MCF 10A (cell line): ENCODE measurements at regions of chr17 and their contacts with region 1.

Region 1: GRCh38 chr17:7687908-7688807 is at the start of gene WRAP53:
- DNase-seq: peak; percentile 100
- H3K4me3 Mint-ChIP-seq: peak within 1 kb of the TSS; percentile 97
- H3K27ac Mint-ChIP-seq: peak within 1 kb of the TSS; percentile 100
- H3K4me1 Mint-ChIP-seq: peaks cover 22% of the 10 kb centered on the region
- H3K27me3 Mint-ChIP-seq: no peaks in the 10 kb centered on the region
- CTCF ChIP-seq: peak; percentile 97
- total RNA-seq, gene WRAP53: 10.7 and 11.7 TPM in 2 replicates

Region 2: GRCh38 chr17:7239091-7240027 is 448.8 kb before region 1 on chr17 and contains the start of gene PHF23:
- CTCF ChIA-PET with region 1: interaction called, 3 read pairs
- POLR2A ChIA-PET with region 1: interaction called, 14 read pairs
- intact Hi-C with region 1: no loop called
- DNase-seq: peak; percentile 99
- H3K4me3 Mint-ChIP-seq: peak within 1 kb of the TSS; percentile 100
- H3K27ac Mint-ChIP-seq: peak within 1 kb of the TSS; percentile 91
- H3K4me1 Mint-ChIP-seq: peaks cover 47% of the 10 kb centered on the region
- H3K27me3 Mint-ChIP-seq: no peaks in the 10 kb centered on the region
- CTCF ChIP-seq: no peak
- total RNA-seq, gene PHF23: 41.8 and 47.1 TPM in 2 replicates

Region 3: GRCh38 chr17:7484067-7484918 is 203.9 kb before region 1 on chr17 and contains the start of gene POLR2A:
- CTCF ChIA-PET with region 1: interaction called, 6 read pairs
- POLR2A ChIA-PET with region 1: interaction called, 51 read pairs
- intact Hi-C with region 1: no loop called
- DNase-seq: peak; percentile 98
- H3K4me3 Mint-ChIP-seq: peak within 1 kb of the TSS; percentile 79
- H3K27ac Mint-ChIP-seq: peak within 1 kb of the TSS; percentile 100
- H3K4me1 Mint-ChIP-seq: peaks cover 43% of the 10 kb centered on the region
- H3K27me3 Mint-ChIP-seq: no peaks in the 10 kb centered on the region
- CTCF ChIP-seq: no peak
- total RNA-seq, gene POLR2A: 89.6 and 107 TPM in 2 replicates

Region 4: DNA sequence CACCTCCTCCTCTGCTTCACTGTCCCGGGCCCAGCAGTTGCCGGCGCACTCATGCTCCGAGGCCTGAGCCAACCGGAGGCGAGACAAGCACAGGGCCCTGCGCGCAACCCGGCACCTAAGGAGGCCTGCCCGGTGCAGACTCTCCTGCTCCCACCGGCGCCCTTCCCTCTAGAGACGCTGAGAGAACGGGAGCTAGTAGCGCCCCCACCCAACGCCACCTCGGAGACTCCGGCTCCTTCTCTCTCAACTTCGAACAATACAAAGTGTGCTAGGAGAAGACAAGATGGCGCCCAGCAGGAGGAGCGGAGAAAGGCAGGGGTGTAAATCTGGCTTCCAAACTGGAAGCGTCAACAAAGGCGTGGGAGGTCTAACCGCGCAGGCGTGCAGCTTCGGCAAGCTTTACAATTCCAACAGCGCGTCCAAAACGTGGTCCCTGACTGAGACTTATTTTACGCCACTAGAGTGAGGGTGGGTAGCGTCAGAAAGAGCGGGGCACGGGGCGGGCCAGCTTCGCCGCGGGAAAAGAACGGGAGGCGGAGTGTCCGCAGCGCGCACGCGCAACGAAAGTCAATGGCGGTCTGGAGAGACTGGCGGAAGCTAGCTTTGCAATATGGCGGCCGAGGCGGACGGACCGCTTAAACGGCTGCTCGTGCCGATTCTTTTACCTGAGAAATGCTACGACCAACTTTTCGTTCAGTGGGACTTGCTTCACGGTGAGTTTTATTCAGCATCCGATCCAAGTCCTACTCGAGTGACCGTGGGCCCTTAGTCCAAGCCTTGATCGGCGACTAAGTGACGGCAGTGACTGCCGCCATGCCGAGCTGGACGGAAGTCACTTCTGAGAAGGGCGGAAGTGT is 104.7 kb before region 1 on chr17 and contains the start of gene MPDU1:
- CTCF ChIA-PET with region 1: interaction called, 89 read pairs
- POLR2A ChIA-PET with region 1: interaction called, 303 read pairs
- intact Hi-C with region 1: loop called (anchors 1 kb)
- DNase-seq: peak; percentile 98
- H3K4me3 Mint-ChIP-seq: peak within 1 kb of the TSS; percentile 93
- H3K27ac Mint-ChIP-seq: peak within 1 kb of the TSS; percentile 100
- H3K4me1 Mint-ChIP-seq: peaks cover 56% of the 10 kb centered on the region
- H3K27me3 Mint-ChIP-seq: no peaks in the 10 kb centered on the region
- CTCF ChIP-seq: no peak
- total RNA-seq, gene MPDU1: 52.0 and 56.5 TPM in 2 replicates

Region 5: GRCh38 chr17:7632492-7632894 is 55.7 kb before region 1 on chr17:
- CTCF ChIA-PET with region 1: interaction called, 48 read pairs
- POLR2A ChIA-PET with region 1: interaction called, 208 read pairs
- intact Hi-C with region 1: loop called (anchors 1 kb)
- DNase-seq: peak; percentile 69
- H3K4me3 Mint-ChIP-seq: no peak overlapping the region
- H3K27ac Mint-ChIP-seq: no peak overlapping the region
- H3K4me1 Mint-ChIP-seq: no peaks in the 10 kb centered on the region
- H3K27me3 Mint-ChIP-seq: no peaks in the 10 kb centered on the region
- CTCF ChIP-seq: peak; percentile 63

Region 6: GRCh38 chr17:7844292-7845154 is 156.4 kb after region 1 on chr17:
- CTCF ChIA-PET with region 1: no interaction called
- POLR2A ChIA-PET with region 1: interaction called, 32 read pairs
- intact Hi-C with region 1: no loop called
- DNase-seq: peak; percentile 96
- H3K4me3 Mint-ChIP-seq: peak overlapping the region; percentile 79
- H3K27ac Mint-ChIP-seq: peak overlapping the region; percentile 87
- H3K4me1 Mint-ChIP-seq: peaks cover 27% of the 10 kb centered on the region
- H3K27me3 Mint-ChIP-seq: no peaks in the 10 kb centered on the region
- CTCF ChIP-seq: no peak

Region 7: DNA sequence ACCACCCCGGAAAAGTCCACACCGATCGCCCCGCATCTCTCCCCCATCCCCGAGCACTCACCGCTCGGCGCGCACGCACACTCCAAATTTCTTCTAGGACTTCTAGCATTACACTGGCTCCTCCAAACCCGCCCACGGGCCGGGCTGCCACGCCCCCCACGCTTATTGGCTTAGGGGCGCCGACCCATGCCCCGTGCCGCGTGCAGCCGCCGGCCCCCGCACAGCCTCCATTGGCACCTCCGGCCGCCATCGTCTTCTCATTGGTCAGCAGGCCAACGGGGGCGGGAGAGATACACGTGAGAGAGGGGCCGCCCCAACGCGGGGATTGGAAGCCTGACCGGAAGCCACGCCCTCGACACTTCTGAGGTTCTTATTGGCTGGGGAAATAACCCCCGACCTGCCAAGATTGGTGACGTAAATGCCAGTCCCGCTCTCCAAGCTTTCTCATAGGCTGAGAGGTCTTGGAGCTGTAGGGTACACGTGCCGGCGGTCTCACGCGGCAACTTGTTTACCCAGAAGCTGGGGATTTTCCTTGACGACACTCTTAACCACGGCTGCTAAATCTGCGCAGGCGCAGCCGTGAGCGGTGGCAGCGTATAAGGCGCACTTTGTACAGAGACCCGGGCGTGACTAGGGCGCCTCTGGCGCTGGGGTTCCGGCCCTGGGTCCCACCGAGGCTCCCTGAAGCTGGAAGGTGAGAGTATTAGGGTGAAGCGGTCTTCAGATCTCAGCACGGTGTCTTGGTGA is 468.3 kb after region 1 on chr17:
- CTCF ChIA-PET with region 1: no interaction called
- POLR2A ChIA-PET with region 1: interaction called, 10 read pairs
- intact Hi-C with region 1: no loop called
- DNase-seq: peak; percentile 100
- H3K4me3 Mint-ChIP-seq: no peak overlapping the region
- H3K27ac Mint-ChIP-seq: no peak overlapping the region
- H3K4me1 Mint-ChIP-seq: peaks cover 38% of the 10 kb centered on the region
- H3K27me3 Mint-ChIP-seq: no peaks in the 10 kb centered on the region
- CTCF ChIP-seq: no peak